Activated T-helper 1 cell treated with anti-CD3 and anti-CD28 coated beads, Interleukin-12 subunit alpha, Interleukin-12 subunit beta, Interleukin-2, Interleukin-4 antibody, amounts not matched to agents 30 ng/mL and 10 ng/mL and 1 ng/mL, durations not matched to agents 14 hours and 24 hours and 36 hours (primary cell): ENCODE measurements at regions of chr1 and their contacts with region 1.

Region 1: GRCh38 chr1:24201941-24202440 is 14.9 kb upstream of the IFNLR1 start:
- DNase-seq: peak; percentile 34
- H3K4me3 Mint-ChIP-seq: no peak overlapping the region
- H3K27ac Mint-ChIP-seq: no peak overlapping the region
- H3K4me1 Mint-ChIP-seq: peaks cover 22% of the 10 kb centered on the region
- H3K27me3 Mint-ChIP-seq: peaks cover 12% of the 10 kb centered on the region

Region 2: GRCh38 chr1:24150234-24151174 is 51.5 kb before region 1 on chr1:
- intact Hi-C with region 1: loop called (anchors 1 kb)
- DNase-seq: peak; percentile 77
- H3K4me3 Mint-ChIP-seq: peak overlapping the region; percentile 65
- H3K27ac Mint-ChIP-seq: no peak overlapping the region
- H3K4me1 Mint-ChIP-seq: peaks cover 18% of the 10 kb centered on the region
- H3K27me3 Mint-ChIP-seq: peaks cover 35% of the 10 kb centered on the region

Region 3: GRCh38 chr1:24321697-24322469 is 119.9 kb after region 1 on chr1:
- intact Hi-C with region 1: loop called (anchors 2 kb)
- DNase-seq: peak; percentile 71
- H3K4me3 Mint-ChIP-seq: peak overlapping the region; percentile 65
- H3K27ac Mint-ChIP-seq: peak overlapping the region; percentile 71
- H3K4me1 Mint-ChIP-seq: peaks cover 48% of the 10 kb centered on the region
- H3K27me3 Mint-ChIP-seq: peaks cover 94% of the 10 kb centered on the region

Region 4: GRCh38 chr1:24526940-24527542 is 325.1 kb after region 1 on chr1:
- intact Hi-C with region 1: loop called (anchors 2 kb)
- DNase-seq: no peak
- H3K4me3 Mint-ChIP-seq: no peak overlapping the region
- H3K27ac Mint-ChIP-seq: no peak overlapping the region
- H3K4me1 Mint-ChIP-seq: peaks cover 18% of the 10 kb centered on the region
- H3K27me3 Mint-ChIP-seq: no peaks in the 10 kb centered on the region

Region 5: DNA sequence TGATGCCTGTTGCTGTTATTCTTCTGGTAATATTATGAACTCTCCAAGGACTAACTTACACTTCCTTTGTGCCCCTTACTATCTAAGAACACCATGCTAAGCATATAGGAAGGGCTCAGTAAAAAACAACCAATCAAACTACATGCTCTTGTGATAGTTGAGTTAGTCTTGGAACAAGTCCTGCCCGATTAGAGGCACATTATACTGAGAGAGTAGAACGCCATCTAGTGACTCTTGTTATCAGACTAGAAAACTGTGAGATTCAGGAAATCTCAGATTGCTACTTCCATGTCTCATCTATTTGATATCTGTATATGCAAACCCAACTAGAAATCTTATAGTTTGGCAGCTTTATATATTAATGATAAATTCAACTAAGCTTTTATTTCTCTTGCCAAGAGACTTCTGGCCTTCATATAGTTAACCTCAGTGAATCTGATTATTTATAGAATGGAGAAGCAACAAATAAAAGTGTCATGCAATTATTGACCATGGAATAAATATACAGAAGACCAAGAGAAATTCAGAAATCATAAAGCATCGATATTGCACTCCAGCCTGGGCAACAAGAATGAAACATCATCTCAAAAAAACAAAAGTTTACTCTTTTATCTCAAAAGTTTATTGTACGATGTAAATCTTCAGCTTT is 433.3 kb after region 1 on chr1:
- intact Hi-C with region 1: loop called (anchors 1 kb)
- DNase-seq: no peak
- H3K4me3 Mint-ChIP-seq: no peak overlapping the region
- H3K27ac Mint-ChIP-seq: no peak overlapping the region
- H3K4me1 Mint-ChIP-seq: no peaks in the 10 kb centered on the region
- H3K27me3 Mint-ChIP-seq: peaks cover 15% of the 10 kb centered on the region

Region 6: GRCh38 chr1:24724345-24725208 is 522.6 kb after region 1 on chr1:
- intact Hi-C with region 1: no loop called
- DNase-seq: no peak
- H3K4me3 Mint-ChIP-seq: no peak overlapping the region
- H3K27ac Mint-ChIP-seq: no peak overlapping the region
- H3K4me1 Mint-ChIP-seq: peaks cover 18% of the 10 kb centered on the region
- H3K27me3 Mint-ChIP-seq: peaks cover 2% of the 10 kb centered on the region

Region 7: DNA sequence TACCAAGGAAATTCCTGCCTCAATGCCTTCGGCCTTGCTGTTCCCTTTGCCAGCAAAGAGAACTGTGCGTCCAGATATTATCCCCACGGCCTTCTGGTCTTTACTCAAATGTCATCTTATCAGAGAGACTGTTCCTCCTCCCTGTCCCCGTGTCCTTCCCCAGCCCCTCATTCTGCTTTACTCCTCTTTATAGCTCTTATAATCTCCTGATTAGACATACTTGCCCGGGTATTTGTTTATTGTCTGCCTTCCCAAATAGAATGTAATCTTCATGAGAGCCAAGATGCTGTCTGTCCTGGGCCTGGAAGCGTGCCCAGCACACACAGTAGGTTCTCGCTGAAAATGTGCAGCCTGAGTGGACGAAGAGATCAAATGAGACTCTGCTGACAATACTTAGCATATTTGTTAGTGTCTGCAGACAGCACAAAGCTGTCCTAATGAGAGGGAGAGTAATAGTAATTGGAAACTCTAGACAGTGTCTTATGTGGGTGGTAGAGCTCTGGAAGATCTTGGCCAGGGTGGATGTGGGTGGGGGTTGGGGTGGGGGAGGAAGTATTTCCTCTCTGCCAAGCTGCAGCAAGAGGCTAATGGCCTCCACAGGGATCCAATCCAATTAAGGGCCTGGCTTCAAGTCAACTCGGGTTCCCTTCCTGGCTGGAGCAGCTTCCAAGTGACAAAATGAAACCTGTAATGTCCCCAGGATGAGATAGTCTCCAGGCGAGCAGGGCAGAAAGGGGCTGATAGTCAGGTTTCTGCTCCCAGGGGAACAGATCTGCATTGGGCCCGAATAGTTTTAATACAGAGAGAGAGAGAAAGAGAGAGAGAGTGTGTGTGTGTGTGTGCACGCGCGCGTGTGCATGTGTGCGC is 533.8 kb after region 1 on chr1:
- intact Hi-C with region 1: no loop called
- DNase-seq: no peak
- H3K4me3 Mint-ChIP-seq: no peak overlapping the region
- H3K27ac Mint-ChIP-seq: peak overlapping the region; percentile 57
- H3K4me1 Mint-ChIP-seq: peaks cover 9% of the 10 kb centered on the region
- H3K27me3 Mint-ChIP-seq: no peaks in the 10 kb centered on the region

Region 8: DNA sequence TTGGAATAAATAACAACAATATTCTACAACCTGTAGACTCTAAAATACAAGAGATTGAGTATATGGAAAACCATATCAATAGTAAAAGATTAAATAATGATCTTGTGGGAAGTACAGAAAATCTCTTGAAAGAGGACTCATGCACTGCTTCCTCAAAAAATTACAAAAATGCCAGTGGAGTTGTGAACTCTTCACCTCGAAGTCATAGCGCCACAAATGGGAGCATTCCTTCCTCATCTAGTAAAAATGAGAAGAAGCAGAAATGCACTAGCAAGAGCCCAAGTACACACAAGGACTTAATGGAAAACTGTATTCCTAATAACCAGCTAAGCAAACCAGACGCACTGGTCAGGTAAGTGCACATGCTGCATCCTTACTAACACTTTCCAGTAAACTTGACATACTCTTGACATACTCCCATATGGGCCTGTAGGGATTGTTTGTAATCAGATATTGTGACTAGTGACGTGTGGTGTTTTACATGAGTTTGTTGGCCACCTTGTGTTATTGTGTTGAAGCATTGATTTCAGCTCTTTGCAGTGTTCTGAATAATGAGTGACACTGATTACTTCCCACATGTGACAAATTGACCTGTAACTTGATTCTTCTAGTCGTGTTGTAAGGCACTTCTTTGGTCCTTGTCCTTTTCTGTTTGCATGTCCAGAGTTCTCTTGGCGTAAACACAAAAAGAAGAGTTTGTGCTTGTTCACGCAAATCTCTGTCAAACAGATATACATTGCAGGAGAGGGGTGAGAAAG is 1256.7 kb after region 1 on chr1:
- intact Hi-C with region 1: no loop called
- DNase-seq: no peak
- H3K4me3 Mint-ChIP-seq: no peak overlapping the region
- H3K27ac Mint-ChIP-seq: no peak overlapping the region
- H3K4me1 Mint-ChIP-seq: peaks cover 5% of the 10 kb centered on the region
- H3K27me3 Mint-ChIP-seq: no peaks in the 10 kb centered on the region